Naive thymus-derived CD4-positive, alpha-beta T cell (primary cell): ENCODE measurements at regions of chr3 and their contacts with region 1.

Region 1: DNA sequence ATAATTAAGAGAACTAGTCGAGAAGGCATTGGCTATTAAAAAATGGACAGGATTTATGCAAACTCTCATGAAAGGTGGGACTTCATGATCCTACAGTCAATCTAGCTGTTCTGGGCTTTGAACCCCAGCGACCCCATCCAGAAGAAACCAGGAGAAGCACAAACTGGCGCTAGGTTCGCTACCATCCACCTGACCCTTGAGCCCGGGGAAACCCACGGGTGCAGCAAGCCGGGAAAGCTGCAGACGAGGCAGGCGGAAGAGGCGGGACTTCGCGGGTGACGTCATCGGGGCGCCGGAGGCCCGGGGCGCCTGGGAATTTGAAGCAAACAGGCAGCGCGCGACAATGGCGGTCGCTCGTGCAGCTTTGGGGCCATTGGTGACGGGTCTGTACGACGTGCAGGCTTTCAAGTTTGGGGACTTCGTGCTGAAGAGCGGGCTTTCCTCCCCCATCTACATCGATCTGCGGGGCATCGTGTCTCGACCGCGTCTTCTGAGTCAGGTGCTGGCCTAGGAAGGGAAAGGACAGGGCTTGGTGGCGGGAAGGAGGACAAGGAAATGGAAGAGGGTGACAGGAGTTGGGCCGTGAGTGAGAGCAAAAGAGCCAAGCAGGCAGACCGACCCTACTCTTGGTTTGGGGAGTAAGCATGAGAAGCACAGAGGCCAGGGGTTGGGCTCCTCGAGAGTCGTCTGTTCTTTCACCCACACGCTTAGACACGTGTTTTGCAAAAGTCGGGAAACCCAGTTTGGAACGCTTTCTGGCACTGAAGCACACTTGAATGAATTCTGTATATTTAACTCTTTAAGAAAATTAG is at the start of gene UMPS:
- DNase-seq: peak; percentile 85 to 94 (median 91)
- ATAC-seq: peak; percentile 97
- H3K4me3 ChIP-seq: peak within 1 kb of the TSS; percentile 78
- H3K4me3 Mint-ChIP-seq: peak within 1 kb of the TSS; percentile 93 to 100 (median 98)
- H3K27ac ChIP-seq: peak within 1 kb of the TSS; percentile 77
- H3K27ac Mint-ChIP-seq: peak within 1 kb of the TSS; percentile 96 to 100 (median 98)
- H3K4me1 ChIP-seq: peaks cover 11 to 32% of the 10 kb centered on the region in 2 donors
- H3K4me1 Mint-ChIP-seq: peaks cover 20 to 51% (median 48%) of the 10 kb centered on the region in 7 donors
- H3K27me3 ChIP-seq: peaks cover 0 to 4% of the 10 kb centered on the region in 2 donors
- H3K27me3 Mint-ChIP-seq: peaks cover 9 to 27% (median 19%) of the 10 kb centered on the region in 5 donors
- total RNA-seq, gene UMPS: 13.2 to 34.8 (median 24.8) TPM

Region 2: DNA sequence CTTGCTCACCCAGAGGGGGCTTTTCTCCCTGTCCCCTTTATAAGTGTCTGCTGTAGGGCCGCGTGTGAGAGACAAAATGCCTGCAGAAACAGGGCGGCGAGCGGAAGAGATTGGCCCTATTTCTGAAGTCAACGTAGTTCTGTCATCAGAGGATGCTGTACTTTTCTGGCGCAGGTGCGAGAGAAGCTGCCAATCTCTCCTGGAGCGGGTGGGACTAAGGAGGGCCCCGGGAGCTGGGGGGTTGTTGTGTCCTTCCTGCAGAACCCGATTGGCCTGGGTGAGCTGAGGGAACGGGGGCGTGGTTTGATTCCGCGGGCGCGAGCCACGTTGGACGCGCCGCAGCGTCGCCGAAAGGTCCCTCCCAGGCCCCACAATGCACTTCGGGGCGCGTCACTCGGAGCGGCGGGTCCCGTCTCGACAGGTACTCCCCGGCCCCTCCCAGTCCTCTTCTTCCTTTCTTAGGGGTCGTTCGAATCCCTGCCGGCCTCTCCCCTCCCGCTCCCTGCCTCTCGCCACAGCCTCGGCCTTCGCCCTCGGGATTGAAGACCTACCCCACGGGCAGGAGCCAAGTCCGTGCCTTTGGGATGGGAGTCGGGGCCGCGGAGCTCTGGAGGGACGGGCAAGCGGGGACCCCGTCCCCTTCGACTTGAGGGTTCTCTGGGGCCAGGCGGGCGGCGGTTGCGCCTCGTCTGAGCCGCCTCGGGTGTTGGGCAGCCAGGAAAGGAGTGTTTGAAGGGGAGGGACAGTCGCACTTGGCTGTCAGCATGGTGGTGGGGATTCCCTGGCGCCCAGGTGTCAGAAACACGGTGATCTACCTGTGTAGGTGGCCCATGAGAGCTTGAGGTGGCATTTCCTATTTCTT is 1528.5 kb before region 1 on chr3 and contains the start of gene SEC22A:
- CTCF ChIA-PET with region 1: no interaction called
- POLR2A ChIA-PET with region 1: no interaction called
- intact Hi-C with region 1: loop called in 1 of 2 experiments (anchors 5 kb)
- DNase-seq: peak; percentile 89 to 99 (median 97)
- ATAC-seq: peak; percentile 97
- H3K4me3 ChIP-seq: peak within 1 kb of the TSS; percentile 90
- H3K4me3 Mint-ChIP-seq: peak within 1 kb of the TSS; percentile 82 to 98 (median 92)
- H3K27ac ChIP-seq: peak within 1 kb of the TSS; percentile 99
- H3K27ac Mint-ChIP-seq: peak within 1 kb of the TSS; percentile 97 to 100 (median 99)
- H3K4me1 ChIP-seq: peaks cover 12% of the 10 kb centered on the region in 2 donors
- H3K4me1 Mint-ChIP-seq: peaks cover 13 to 41% (median 31%) of the 10 kb centered on the region in 7 donors
- H3K27me3 ChIP-seq: no peaks in the 10 kb centered on the region
- H3K27me3 Mint-ChIP-seq: peaks cover 0 to 9% (median 2%) of the 10 kb centered on the region in 5 donors
- total RNA-seq, gene SEC22A: 15.0 to 20.1 (median 17.1) TPM

Region 3: GRCh38 chr3:123584988-123585937 is 1145.1 kb before region 1 on chr3 and contains the start of gene HACD2:
- CTCF ChIA-PET with region 1: no interaction called
- POLR2A ChIA-PET with region 1: no interaction called
- intact Hi-C with region 1: loop called in 1 of 2 experiments (anchors 1 kb)
- DNase-seq: peak; percentile 87 to 96 (median 90)
- ATAC-seq: peak; percentile 96
- H3K4me3 ChIP-seq: peak within 1 kb of the TSS; percentile 98
- H3K4me3 Mint-ChIP-seq: peak within 1 kb of the TSS in 3 of 10 donors; percentile 87 to 90 (median 89)
- H3K27ac ChIP-seq: peak within 1 kb of the TSS; percentile 79
- H3K27ac Mint-ChIP-seq: peak within 1 kb of the TSS; percentile 44 to 93 (median 83)
- H3K4me1 ChIP-seq: peaks cover 8 to 13% of the 10 kb centered on the region in 2 donors
- H3K4me1 Mint-ChIP-seq: peaks cover 14 to 32% (median 30%) of the 10 kb centered on the region in 7 donors
- H3K27me3 ChIP-seq: no peaks in the 10 kb centered on the region
- H3K27me3 Mint-ChIP-seq: no peaks in the 10 kb centered on the region
- total RNA-seq, gene HACD2: 15.9 to 28.3 (median 24.0) TPM

Region 4: GRCh38 chr3:124584552-124585391 is 145.6 kb before region 1 on chr3:
- CTCF ChIA-PET with region 1: no interaction called
- POLR2A ChIA-PET with region 1: no interaction called
- intact Hi-C with region 1: loop called in 1 of 2 experiments (anchors 5 kb)
- DNase-seq: peak in 6 of 9 donors; percentile 3 to 19 (median 11)
- ATAC-seq: peak; percentile 65
- H3K4me3 ChIP-seq: peak overlapping the region; percentile 63
- H3K4me3 Mint-ChIP-seq: peak overlapping the region; percentile 66 to 92 (median 82)
- H3K27ac ChIP-seq: no peak overlapping the region
- H3K27ac Mint-ChIP-seq: peak overlapping the region in 7 of 9 donors; percentile 8 to 75 (median 56)
- H3K4me1 ChIP-seq: peaks cover 0 to 23% of the 10 kb centered on the region in 2 donors
- H3K4me1 Mint-ChIP-seq: peaks cover 12 to 44% (median 23%) of the 10 kb centered on the region in 7 donors
- H3K27me3 ChIP-seq: no peaks in the 10 kb centered on the region
- H3K27me3 Mint-ChIP-seq: peaks cover 0 to 74% (median 45%) of the 10 kb centered on the region in 5 donors

Region 5: GRCh38 chr3:124747111-124747981 is 17.0 kb after region 1 on chr3:
- CTCF ChIA-PET with region 1: no interaction called
- POLR2A ChIA-PET with region 1: interaction called, 5 read pairs
- intact Hi-C with region 1: loop called in 1 of 2 experiments (anchors 2 kb)
- DNase-seq: no peak
- ATAC-seq: no peak
- H3K4me3 ChIP-seq: no peak overlapping the region
- H3K4me3 Mint-ChIP-seq: no peak overlapping the region
- H3K27ac ChIP-seq: no peak overlapping the region
- H3K27ac Mint-ChIP-seq: peak overlapping the region in 1 of 9 donors; percentile 12
- H3K4me1 ChIP-seq: no peaks in the 10 kb centered on the region
- H3K4me1 Mint-ChIP-seq: peaks cover 0 to 1% (median 0%) of the 10 kb centered on the region in 7 donors
- H3K27me3 ChIP-seq: no peaks in the 10 kb centered on the region
- H3K27me3 Mint-ChIP-seq: peaks cover 0 to 6% (median 0%) of the 10 kb centered on the region in 5 donors

Region 6: GRCh38 chr3:125594581-125595011 is 864.3 kb after region 1 on chr3:
- CTCF ChIA-PET with region 1: no interaction called
- POLR2A ChIA-PET with region 1: interaction called, 3 read pairs
- intact Hi-C with region 1: loop called (anchors 1 kb)
- DNase-seq: peak in 4 of 9 donors; percentile 10 to 25 (median 16)
- ATAC-seq: no peak
- H3K4me3 ChIP-seq: peak overlapping the region; percentile 82
- H3K4me3 Mint-ChIP-seq: peak overlapping the region; percentile 90 to 99 (median 94)
- H3K27ac ChIP-seq: peak overlapping the region; percentile 90
- H3K27ac Mint-ChIP-seq: peak overlapping the region; percentile 73 to 95 (median 89)
- H3K4me1 ChIP-seq: peaks cover 4 to 15% of the 10 kb centered on the region in 2 donors
- H3K4me1 Mint-ChIP-seq: peaks cover 32 to 50% (median 42%) of the 10 kb centered on the region in 7 donors
- H3K27me3 ChIP-seq: no peaks in the 10 kb centered on the region
- H3K27me3 Mint-ChIP-seq: no peaks in the 10 kb centered on the region

Region 7: GRCh38 chr3:125990253-125990970 is 1260.1 kb after region 1 on chr3:
- CTCF ChIA-PET with region 1: no interaction called
- POLR2A ChIA-PET with region 1: no interaction called
- intact Hi-C with region 1: loop called in 1 of 2 experiments (anchors 10 kb)
- DNase-seq: peak in 8 of 9 donors; percentile 57 to 84 (median 73)
- ATAC-seq: peak; percentile 91
- H3K4me3 ChIP-seq: peak overlapping the region; percentile 80
- H3K4me3 Mint-ChIP-seq: peak overlapping the region; percentile 95 to 100 (median 98)
- H3K27ac ChIP-seq: peak overlapping the region; percentile 82
- H3K27ac Mint-ChIP-seq: peak overlapping the region; percentile 92 to 100 (median 98)
- H3K4me1 ChIP-seq: peaks cover 5 to 7% of the 10 kb centered on the region in 2 donors
- H3K4me1 Mint-ChIP-seq: peaks cover 10 to 41% (median 25%) of the 10 kb centered on the region in 7 donors
- H3K27me3 ChIP-seq: no peaks in the 10 kb centered on the region
- H3K27me3 Mint-ChIP-seq: peaks cover 0 to 23% (median 0%) of the 10 kb centered on the region in 5 donors